CD4-positive, alpha-beta T cell (primary cell): ENCODE measurements at regions of chr1 and their contacts with region 1.

Region 1: GRCh38 chr1:145845514-145846161 is at the start of gene NUDT17:
- DNase-seq: peak; percentile 63 to 88 (median 74)
- ATAC-seq: peak; percentile 80
- H3K4me3 ChIP-seq: peak within 1 kb of the TSS; percentile 77
- H3K4me3 Mint-ChIP-seq: no peak within 1 kb of the TSS
- H3K27ac ChIP-seq: no peak within 1 kb of the TSS
- H3K27ac Mint-ChIP-seq: peak within 1 kb of the TSS; percentile 40
- H3K4me1 ChIP-seq: peaks cover 20% of the 10 kb centered on the region
- H3K4me1 Mint-ChIP-seq: peaks cover 11% of the 10 kb centered on the region
- H3K27me3 ChIP-seq: no peaks in the 10 kb centered on the region
- H3K27me3 Mint-ChIP-seq: no peaks in the 10 kb centered on the region
- CTCF ChIP-seq: peak; percentile 96
- total RNA-seq, gene NUDT17: 1.6 to 2.8 TPM

Region 2: DNA sequence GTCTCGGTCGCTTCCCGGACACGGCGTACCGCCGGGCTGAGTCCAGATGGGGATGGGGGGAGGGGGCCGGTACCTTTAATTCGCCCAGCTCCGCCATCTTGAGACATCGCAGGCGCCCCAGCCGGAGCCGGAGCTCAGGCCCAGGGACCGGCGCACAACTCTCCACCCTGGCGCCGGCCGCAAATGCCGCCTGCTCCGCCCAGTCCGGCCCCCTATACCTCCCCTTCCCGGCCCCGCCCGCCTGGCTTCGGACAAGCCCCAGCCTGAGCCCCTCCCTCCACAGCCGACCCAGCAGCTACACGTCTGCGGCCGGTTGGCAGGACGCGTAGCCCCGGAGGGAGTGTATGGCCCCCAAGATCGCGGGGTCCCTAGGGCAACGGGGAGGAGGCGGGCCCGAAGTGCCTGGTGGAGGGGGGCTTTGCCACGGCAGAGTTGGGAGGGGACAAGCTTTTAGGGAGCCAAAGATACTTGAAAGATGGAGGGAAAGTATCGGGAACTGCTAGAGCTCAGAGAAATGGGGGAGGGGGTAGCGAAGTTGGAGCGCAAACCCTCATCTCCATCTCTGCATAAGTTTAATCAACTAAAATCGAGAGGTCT is 13.4 kb after region 1 on chr1 and contains the start of gene PIAS3:
- CTCF ChIA-PET with region 1: interaction called, 71 read pairs
- POLR2A ChIA-PET with region 1: interaction called, 120 read pairs
- intact Hi-C with region 1: loop called in 1 of 2 experiments (anchors 2 kb)
- DNase-seq: peak; percentile 61 to 90 (median 75)
- ATAC-seq: peak; percentile 79
- H3K4me3 ChIP-seq: peak within 1 kb of the TSS; percentile 75
- H3K4me3 Mint-ChIP-seq: peak within 1 kb of the TSS; percentile 98
- H3K27ac ChIP-seq: peak within 1 kb of the TSS; percentile 32 to 67
- H3K27ac Mint-ChIP-seq: peak within 1 kb of the TSS; percentile 85
- H3K4me1 ChIP-seq: peaks cover 22% of the 10 kb centered on the region
- H3K4me1 Mint-ChIP-seq: peaks cover 20% of the 10 kb centered on the region
- H3K27me3 ChIP-seq: no peaks in the 10 kb centered on the region
- H3K27me3 Mint-ChIP-seq: no peaks in the 10 kb centered on the region
- CTCF ChIP-seq: no peak
- total RNA-seq, gene PIAS3: 18.7 to 19.7 TPM

Region 3: DNA sequence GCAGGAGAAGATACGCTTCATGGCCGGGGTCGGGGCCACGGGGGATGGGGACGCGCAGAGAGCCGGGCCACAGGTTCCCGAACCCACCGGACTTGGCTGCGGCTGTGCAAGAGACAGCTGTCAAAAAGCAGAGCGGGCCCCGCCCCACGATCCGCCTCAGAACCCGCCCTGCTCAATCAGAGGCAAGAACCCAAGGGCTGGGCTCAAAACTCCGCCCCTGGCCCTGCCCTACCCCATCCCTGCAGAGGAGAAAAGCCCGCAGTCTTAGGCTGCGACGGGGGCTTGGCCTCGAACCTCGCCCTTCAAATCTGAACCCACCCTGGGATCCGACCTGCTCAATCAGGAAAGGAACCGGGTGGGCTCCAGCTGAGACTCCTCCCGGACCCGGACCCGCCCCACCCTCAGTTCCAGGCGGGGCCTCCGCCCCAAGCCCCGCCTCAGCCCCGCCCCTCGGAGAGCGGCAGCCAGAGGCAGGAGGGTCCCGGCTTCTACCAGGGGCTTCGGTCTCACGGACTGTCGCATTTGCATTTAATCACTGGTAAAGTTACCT is 40.2 kb after region 1 on chr1 and contains the start of gene ANKRD35:
- CTCF ChIA-PET with region 1: interaction called, 17 read pairs
- POLR2A ChIA-PET with region 1: interaction called, 6 read pairs
- intact Hi-C with region 1: no loop called
- DNase-seq: peak; percentile 70 to 92 (median 84)
- ATAC-seq: peak; percentile 99
- H3K4me3 ChIP-seq: peak within 1 kb of the TSS; percentile 70
- H3K4me3 Mint-ChIP-seq: peak within 1 kb of the TSS; percentile 89
- H3K27ac ChIP-seq: no peak within 1 kb of the TSS
- H3K27ac Mint-ChIP-seq: no peak within 1 kb of the TSS
- H3K4me1 ChIP-seq: peaks cover 17% of the 10 kb centered on the region
- H3K4me1 Mint-ChIP-seq: peaks cover 20% of the 10 kb centered on the region
- H3K27me3 ChIP-seq: peaks cover 14 to 22% of the 10 kb centered on the region in 2 experiments
- H3K27me3 Mint-ChIP-seq: peaks cover 27% of the 10 kb centered on the region
- CTCF ChIP-seq: no peak
- total RNA-seq, gene ANKRD35: 0.11 TPM in 1 of 2 experiments, not detected in the other

Region 4: DNA sequence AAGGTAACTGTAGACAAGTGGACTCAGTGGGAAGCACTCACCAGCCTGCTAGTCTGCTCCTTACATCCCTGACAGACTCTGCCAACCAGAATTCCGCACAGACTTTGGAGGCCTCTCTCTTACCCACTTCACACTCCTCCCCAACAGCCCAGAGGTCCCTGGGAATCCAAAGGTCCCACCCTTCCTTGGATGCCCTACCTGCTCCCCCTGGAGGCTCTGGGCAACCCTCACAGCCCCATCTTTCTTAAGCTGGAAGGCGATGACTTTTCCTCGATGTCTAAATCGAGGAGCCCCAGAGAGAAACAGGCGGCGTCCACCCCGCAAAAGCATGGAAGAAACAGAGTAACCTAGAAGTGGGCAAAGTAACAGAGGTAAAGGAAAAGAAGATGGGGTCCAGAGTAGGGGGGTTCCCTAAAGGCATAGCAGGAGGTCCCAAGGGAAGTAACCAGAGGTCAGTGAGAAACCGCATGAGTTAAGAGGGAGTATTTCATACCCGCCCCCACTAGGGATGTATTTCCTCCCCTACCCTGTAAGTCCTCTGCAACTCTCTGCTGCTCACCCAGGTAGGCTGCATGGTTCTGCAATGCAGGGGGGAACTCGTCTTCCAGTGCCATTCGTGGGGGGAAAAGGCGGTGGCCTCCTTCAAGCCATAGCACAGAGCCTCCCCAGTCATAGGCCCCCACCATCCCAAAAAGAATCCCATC is 55.8 kb after region 1 on chr1:
- CTCF ChIA-PET with region 1: no interaction called
- POLR2A ChIA-PET with region 1: no interaction called
- intact Hi-C with region 1: no loop called
- DNase-seq: no peak
- ATAC-seq: no peak
- H3K4me3 ChIP-seq: no peak overlapping the region
- H3K4me3 Mint-ChIP-seq: no peak overlapping the region
- H3K27ac ChIP-seq: no peak overlapping the region
- H3K27ac Mint-ChIP-seq: no peak overlapping the region
- H3K4me1 ChIP-seq: no peaks in the 10 kb centered on the region
- H3K4me1 Mint-ChIP-seq: no peaks in the 10 kb centered on the region
- H3K27me3 ChIP-seq: no peaks in the 10 kb centered on the region
- H3K27me3 Mint-ChIP-seq: no peaks in the 10 kb centered on the region
- CTCF ChIP-seq: no peak

Region 5: DNA sequence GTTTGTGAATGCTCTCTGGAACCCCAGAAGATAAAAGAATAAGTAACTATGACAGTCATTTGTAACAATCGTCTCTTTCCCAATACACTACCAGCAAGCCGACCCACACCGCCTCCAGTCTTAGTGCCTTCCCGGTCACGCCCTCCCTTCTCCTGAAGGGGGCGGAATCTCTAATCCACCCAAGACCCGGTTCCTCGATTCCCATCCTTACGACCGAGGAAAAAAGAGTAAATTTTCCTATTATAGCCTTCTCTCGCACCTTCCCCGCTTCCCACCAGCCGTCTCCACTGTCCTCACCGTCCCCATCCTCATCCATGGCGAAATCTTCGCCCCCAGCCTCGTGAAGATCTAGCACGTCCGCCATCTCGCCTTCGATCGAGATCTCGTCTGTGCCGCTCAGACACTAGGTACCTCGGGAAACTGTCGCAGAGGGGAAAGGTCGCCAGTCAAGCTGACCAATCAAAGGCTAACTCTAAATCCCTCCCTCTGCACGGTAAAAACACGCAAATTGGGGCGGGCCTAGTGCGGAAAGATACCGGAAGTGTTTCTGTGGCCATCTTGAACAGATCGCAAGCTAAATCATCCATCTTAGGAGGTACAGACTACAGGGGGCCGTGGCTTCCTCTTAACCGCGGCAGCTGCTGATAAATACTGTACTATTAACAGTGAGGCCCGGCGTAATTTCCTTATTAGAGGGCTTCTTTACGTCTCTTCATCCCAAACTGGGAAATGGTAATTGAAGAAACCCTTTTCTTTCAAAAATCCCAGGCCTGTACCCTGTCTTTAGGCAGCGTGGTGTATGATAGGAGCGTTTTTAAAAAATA is 81.6 kb after region 1 on chr1 and contains the start of gene RBM8A:
- CTCF ChIA-PET with region 1: interaction called, 10 read pairs
- POLR2A ChIA-PET with region 1: interaction called, 27 read pairs
- intact Hi-C with region 1: no loop called
- DNase-seq: peak; percentile 87 to 99 (median 90)
- ATAC-seq: peak; percentile 96
- H3K4me3 ChIP-seq: peak within 1 kb of the TSS; percentile 95
- H3K4me3 Mint-ChIP-seq: no peak within 1 kb of the TSS
- H3K27ac ChIP-seq: peak within 1 kb of the TSS; percentile 93 to 98
- H3K27ac Mint-ChIP-seq: no peak within 1 kb of the TSS
- H3K4me1 ChIP-seq: peaks cover 37% of the 10 kb centered on the region
- H3K4me1 Mint-ChIP-seq: peaks cover 21% of the 10 kb centered on the region
- H3K27me3 ChIP-seq: no peaks in the 10 kb centered on the region
- H3K27me3 Mint-ChIP-seq: no peaks in the 10 kb centered on the region
- CTCF ChIP-seq: peak; percentile 81
- total RNA-seq, gene RBM8A: 126 to 134 TPM

Region 6: DNA sequence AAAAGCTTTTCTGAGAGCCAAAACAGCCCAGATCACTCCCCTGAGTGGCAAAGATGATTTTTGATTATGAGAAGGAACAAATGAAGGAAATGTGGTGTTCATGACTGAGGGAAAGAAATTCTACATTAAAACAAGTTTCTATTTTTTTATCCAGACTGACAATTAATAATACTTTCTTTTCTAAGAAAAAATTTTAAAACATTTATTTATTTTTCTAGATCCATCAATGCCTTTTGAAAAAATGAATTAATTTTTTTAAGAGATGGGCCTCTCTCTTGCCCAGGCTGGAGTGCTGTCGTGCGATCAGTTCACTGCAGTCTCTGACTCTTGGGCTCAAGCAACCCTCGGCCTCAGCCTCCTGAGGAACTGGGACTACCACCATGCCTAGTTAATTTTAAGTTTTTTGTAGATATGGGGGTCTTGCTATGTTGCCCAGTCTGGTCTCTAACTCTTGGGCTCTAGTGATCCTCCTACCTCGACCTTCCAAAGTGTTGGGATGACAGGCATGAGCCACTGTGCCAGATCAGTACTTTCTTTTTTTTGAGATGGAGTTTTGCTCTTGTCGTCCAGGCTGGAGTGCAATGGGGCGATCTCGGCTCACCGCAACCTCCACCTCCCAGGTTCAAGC is 162.0 kb after region 1 on chr1:
- CTCF ChIA-PET with region 1: interaction called, 32 read pairs
- POLR2A ChIA-PET with region 1: interaction called, 15 read pairs
- intact Hi-C with region 1: loop called in 1 of 2 experiments (anchors 2 kb)
- DNase-seq: no peak
- ATAC-seq: no peak
- H3K4me3 ChIP-seq: no peak overlapping the region
- H3K4me3 Mint-ChIP-seq: peak overlapping the region; percentile 86
- H3K27ac ChIP-seq: no peak overlapping the region
- H3K27ac Mint-ChIP-seq: peak overlapping the region; percentile 86
- H3K4me1 ChIP-seq: peaks cover 47% of the 10 kb centered on the region
- H3K4me1 Mint-ChIP-seq: peaks cover 46% of the 10 kb centered on the region
- H3K27me3 ChIP-seq: no peaks in the 10 kb centered on the region
- H3K27me3 Mint-ChIP-seq: no peaks in the 10 kb centered on the region
- CTCF ChIP-seq: peak; percentile 5